Left cardiac atrium (tissue), 4 donors: ENCODE measurements at regions of chr4 and their contacts with region 1.

Region 1: DNA sequence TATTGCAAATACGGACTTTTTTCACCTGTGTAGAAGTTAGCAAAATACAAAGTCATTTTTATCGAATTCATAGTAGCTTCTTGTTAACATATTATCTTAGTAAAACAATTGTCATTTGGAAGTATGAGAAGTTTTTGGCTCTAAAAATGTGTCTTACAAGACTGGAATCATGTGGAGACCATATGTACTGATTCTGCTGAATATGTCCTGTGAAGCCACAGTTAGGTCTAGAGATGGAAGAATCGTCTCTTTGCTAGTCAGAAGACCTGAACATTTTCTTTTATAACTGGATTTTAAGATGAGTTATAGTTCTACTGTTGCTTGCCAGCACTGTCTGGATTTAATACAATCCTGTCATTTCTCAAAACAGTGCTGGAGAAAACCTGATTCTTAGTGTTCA is 29.0 kb downstream of the TMEM165 start:
- DNase-seq: no peak
- ATAC-seq: no peak

Region 2: DNA sequence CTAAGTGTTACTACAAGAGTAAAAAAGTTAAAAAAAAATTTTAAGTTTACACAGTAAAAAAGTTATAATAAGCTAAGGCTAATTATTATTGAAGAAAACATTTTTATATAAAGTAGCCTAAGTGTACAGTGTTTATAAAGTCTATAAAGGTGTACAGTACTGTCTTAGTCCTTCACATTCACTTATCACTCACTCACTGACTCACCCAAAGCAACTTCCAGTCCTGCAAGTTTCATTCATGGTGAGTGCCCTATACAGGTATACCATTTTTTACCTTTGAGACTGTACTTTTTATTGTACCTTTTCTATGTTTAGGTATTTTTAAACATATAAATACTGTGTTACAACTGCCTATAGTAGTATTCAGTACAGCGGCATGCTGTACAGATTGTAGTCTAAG is 45.2 kb after region 1 on chr4:
- intact Hi-C with region 1: loop called in 1 of 2 experiments (anchors 5 kb)
- DNase-seq: no peak
- ATAC-seq: no peak